ENCODE measurements at regions of chr15 and their contacts with region 1.

Region 1: DNA sequence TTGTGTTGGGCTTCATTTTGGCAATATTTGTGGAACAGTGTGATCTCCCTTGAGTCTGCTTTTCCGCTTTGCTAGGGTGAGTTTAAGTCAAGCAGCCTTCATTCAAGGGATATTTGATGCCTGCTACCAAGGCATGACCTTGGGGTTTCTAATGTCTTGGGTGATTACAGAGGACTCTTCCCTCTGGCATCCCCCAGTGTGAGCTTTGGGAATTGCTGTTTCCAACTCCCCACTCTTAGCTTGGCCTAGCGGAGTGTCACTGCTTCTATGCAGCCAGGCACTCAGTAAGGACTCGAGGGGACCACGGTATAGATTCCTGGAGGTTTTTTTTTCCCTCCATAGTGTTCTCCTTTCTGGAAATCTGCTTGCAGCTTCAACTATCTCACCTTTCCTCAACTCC is 21.1 kb downstream of the GCNT3 start:
- DNase-seq: no peak
- H3K4me3 ChIP-seq: no peak overlapping the region
- CTCF ChIP-seq: no peak
- POLR2A ChIP-seq: no peak

Region 2: GRCh38 chr15:58889363-58889762 is 743.4 kb before region 1 on chr15:
- intact Hi-C with region 1: loop called (anchors 5 kb)
- DNase-seq: no peak
- H3K4me3 ChIP-seq: no peak overlapping the region
- CTCF ChIP-seq: no peak
- POLR2A ChIP-seq: no peak

Region 3: GRCh38 chr15:59812250-59812870 is 179.6 kb after region 1 on chr15:
- intact Hi-C with region 1: no loop called
- DNase-seq: no peak
- H3K4me3 ChIP-seq: no peak overlapping the region
- CTCF ChIP-seq: no peak
- POLR2A ChIP-seq: no peak

Measured in lower leg skin (tissue), 4 donors.